BJ (cell line): ENCODE measurements at regions of chr21 and their contacts with region 1.

Region 1: GRCh38 chr21:32448803-32449594 is 36.5 kb downstream of the EVA1C start:
- DNase-seq: peak; percentile 46
- H3K4me3 ChIP-seq: no peak overlapping the region
- H3K27me3 ChIP-seq: no peaks in the 10 kb centered on the region
- CTCF ChIP-seq: no peak

Region 2: GRCh38 chr21:32475164-32475812 is 26.3 kb after region 1 on chr21:
- CTCF ChIA-PET with region 1: no interaction called
- POLR2A ChIA-PET with region 1: interaction called, 11 read pairs
- DNase-seq: peak; percentile 89
- H3K4me3 ChIP-seq: no peak overlapping the region
- H3K27me3 ChIP-seq: no peaks in the 10 kb centered on the region
- CTCF ChIP-seq: no peak